CD8-positive, alpha-beta T cell (primary cell): ENCODE measurements at regions of chr1 and their contacts with region 1.

Region 1: DNA sequence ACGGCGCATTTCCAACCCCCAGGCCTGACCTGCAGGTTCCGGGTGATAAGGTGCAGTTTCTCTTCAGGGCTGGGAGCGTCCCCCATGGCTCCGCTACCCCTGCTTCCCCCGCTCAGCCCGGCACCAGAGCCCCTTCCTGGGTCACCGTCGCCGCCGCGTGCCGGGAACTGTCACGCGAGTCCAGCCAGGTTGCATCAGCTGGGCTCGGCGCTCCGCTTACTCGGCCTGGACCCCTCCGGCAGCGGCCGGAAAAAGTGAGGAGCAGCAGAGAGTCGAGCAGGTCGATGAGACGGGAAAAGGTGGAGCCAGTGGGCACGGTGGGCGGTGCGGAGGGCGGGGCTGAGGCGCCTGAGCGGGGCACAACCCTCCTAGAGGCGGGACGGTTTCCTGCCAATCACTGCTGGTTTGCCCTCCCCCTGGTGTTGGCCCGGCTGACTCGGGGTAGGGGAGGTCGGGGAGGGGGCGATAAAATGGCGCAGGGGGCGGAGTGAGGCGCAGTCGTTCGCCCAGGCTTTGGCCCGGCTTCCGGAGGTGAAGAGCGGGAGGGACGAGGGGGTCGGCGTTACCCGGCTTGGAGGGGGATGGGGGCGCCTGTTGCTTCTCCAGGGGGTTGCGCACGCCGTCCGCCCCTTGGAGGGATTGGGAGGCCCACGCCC is at the starts of genes S100PBP and YARS1:
- DNase-seq: peak; percentile 98 to 100 (median 100)
- ATAC-seq: peak; percentile 95
- H3K4me3 ChIP-seq: peak within 1 kb of the TSS; percentile 86 to 98
- H3K4me3 Mint-ChIP-seq: peak within 1 kb of the TSS; percentile 96
- H3K27ac ChIP-seq: peak within 1 kb of the TSS; percentile 76 to 84
- H3K27ac Mint-ChIP-seq: peak within 1 kb of the TSS; percentile 90
- H3K4me1 ChIP-seq: peaks cover 34% of the 10 kb centered on the region
- H3K4me1 Mint-ChIP-seq: peaks cover 63% of the 10 kb centered on the region
- H3K27me3 ChIP-seq: no peaks in the 10 kb centered on the region
- H3K27me3 Mint-ChIP-seq: no peaks in the 10 kb centered on the region
- CTCF ChIP-seq: no peak
- total RNA-seq, gene S100PBP: 21.2 to 26.6 TPM
- total RNA-seq, gene YARS1: 105 to 114 TPM

Region 2: DNA sequence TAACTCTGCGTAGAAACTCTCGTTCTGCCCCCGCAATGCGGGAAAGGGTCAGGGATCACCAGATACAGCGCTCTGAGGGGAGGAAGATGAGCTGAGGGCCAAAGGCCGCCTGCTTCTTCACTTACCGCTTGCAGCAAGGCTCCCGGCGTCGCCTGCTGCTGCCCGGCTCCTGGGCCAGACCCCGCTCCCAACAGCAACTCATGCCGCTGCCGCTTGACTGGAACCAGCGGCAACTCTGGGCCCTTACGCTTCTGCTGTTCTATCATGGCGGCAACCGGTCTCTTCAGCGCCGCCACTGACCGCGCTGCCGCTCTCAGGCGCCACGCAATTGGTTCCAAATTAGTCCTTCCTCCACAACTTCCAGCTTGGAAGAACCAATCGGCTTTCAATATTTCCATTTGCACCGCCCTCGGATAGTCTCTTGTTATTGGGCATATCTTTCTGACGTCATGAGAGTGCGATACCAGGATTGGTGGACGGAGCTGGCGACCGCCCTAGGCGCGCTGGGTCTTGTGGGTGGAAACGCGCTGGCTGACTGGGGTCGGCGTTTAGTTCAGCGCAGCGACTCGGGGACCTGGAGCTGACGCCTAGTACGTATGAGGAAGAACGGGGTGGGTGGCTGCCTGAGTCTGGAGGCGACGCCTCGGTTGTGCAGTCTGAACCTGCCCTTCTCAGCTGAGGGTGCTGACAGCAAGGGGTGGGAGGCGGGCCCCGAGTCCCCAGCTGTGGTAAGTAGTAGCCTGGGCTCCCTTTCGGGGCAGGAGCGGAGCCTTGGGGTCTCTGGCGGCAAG is 1520.6 kb before region 1 on chr1 and contains the starts of genes SNRNP40 and ZCCHC17:
- CTCF ChIA-PET with region 1: no interaction called
- POLR2A ChIA-PET with region 1: no interaction called
- intact Hi-C with region 1: loop called in 1 of 2 experiments (anchors 5 kb)
- DNase-seq: peak; percentile 85 to 99 (median 91)
- ATAC-seq: peak; percentile 90
- H3K4me3 ChIP-seq: peak within 1 kb of the TSS; percentile 67 to 83
- H3K4me3 Mint-ChIP-seq: no peak within 1 kb of the TSS
- H3K27ac ChIP-seq: peak within 1 kb of the TSS; percentile 90 to 92
- H3K27ac Mint-ChIP-seq: no peak within 1 kb of the TSS
- H3K4me1 ChIP-seq: peaks cover 31% of the 10 kb centered on the region
- H3K4me1 Mint-ChIP-seq: peaks cover 35% of the 10 kb centered on the region
- H3K27me3 ChIP-seq: no peaks in the 10 kb centered on the region
- H3K27me3 Mint-ChIP-seq: no peaks in the 10 kb centered on the region
- CTCF ChIP-seq: no peak
- total RNA-seq, gene SNRNP40: 78.3 to 81.9 TPM
- total RNA-seq, gene ZCCHC17: 7.2 to 8.0 TPM

Region 3: GRCh38 chr1:32200226-32201010 is 616.9 kb before region 1 on chr1 and contains the start of gene CCDC28B:
- CTCF ChIA-PET with region 1: no interaction called
- POLR2A ChIA-PET with region 1: no interaction called
- intact Hi-C with region 1: loop called in 1 of 2 experiments (anchors 5 kb)
- DNase-seq: peak in 8 of 9 experiments; percentile 32 to 81 (median 64)
- ATAC-seq: peak; percentile 49
- H3K4me3 ChIP-seq: peak within 1 kb of the TSS; percentile 69 to 70
- H3K4me3 Mint-ChIP-seq: peak within 1 kb of the TSS; percentile 85
- H3K27ac ChIP-seq: peak within 1 kb of the TSS; percentile 75 to 78
- H3K27ac Mint-ChIP-seq: peak within 1 kb of the TSS; percentile 97
- H3K4me1 ChIP-seq: peaks cover 46% of the 10 kb centered on the region
- H3K4me1 Mint-ChIP-seq: peaks cover 59% of the 10 kb centered on the region
- H3K27me3 ChIP-seq: no peaks in the 10 kb centered on the region
- H3K27me3 Mint-ChIP-seq: no peaks in the 10 kb centered on the region
- CTCF ChIP-seq: no peak
- total RNA-seq, gene CCDC28B: 3.8 to 5.2 TPM

Region 4: GRCh38 chr1:32716312-32717148 is 100.8 kb before region 1 on chr1:
- CTCF ChIA-PET with region 1: no interaction called
- POLR2A ChIA-PET with region 1: no interaction called
- intact Hi-C with region 1: loop called in 1 of 2 experiments (anchors 1 kb)
- DNase-seq: peak in 5 of 9 experiments; percentile 3 to 58 (median 43)
- ATAC-seq: no peak
- H3K4me3 ChIP-seq: no peak overlapping the region
- H3K4me3 Mint-ChIP-seq: no peak overlapping the region
- H3K27ac ChIP-seq: no peak overlapping the region
- H3K27ac Mint-ChIP-seq: no peak overlapping the region
- H3K4me1 ChIP-seq: no peaks in the 10 kb centered on the region
- H3K4me1 Mint-ChIP-seq: peaks cover 11% of the 10 kb centered on the region
- H3K27me3 ChIP-seq: no peaks in the 10 kb centered on the region
- H3K27me3 Mint-ChIP-seq: peaks cover 7% of the 10 kb centered on the region
- CTCF ChIP-seq: no peak

Region 5: DNA sequence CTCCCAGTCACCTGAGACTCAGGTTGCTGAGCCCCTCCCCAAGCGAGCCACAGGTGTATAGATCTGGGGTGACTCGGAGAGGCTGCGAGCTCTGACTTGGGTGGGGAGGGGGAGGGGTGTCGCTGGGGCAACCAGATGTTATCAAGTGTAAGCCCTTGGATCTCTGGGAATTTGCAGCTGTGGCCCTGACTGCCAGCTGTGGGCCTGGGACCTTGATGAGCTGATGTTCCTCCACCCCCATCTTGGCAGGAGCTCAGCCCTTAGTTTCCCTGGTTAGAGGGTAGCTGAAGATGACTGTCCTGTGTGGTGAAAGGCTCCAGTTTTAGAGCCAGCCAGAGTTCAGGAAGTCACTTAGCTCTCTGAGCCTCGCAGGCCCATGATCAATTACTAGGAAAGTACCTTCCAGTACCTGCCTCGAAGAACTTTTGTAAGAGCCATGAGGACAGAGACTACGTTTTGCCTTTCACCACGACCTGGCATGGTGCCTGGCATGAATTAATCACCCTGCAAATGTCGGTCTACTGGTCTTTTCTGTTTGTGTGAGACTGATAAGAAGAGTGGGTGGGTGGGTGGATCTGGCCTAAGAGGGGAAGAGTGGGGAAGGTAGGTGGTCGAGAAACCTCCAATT is 55.9 kb before region 1 on chr1:
- CTCF ChIA-PET with region 1: no interaction called
- POLR2A ChIA-PET with region 1: no interaction called
- intact Hi-C with region 1: no loop called
- DNase-seq: no peak
- ATAC-seq: no peak
- H3K4me3 ChIP-seq: no peak overlapping the region
- H3K4me3 Mint-ChIP-seq: no peak overlapping the region
- H3K27ac ChIP-seq: no peak overlapping the region
- H3K27ac Mint-ChIP-seq: no peak overlapping the region
- H3K4me1 ChIP-seq: peaks cover 11% of the 10 kb centered on the region
- H3K4me1 Mint-ChIP-seq: peaks cover 10% of the 10 kb centered on the region
- H3K27me3 ChIP-seq: no peaks in the 10 kb centered on the region
- H3K27me3 Mint-ChIP-seq: no peaks in the 10 kb centered on the region
- CTCF ChIP-seq: no peak

Region 6: DNA sequence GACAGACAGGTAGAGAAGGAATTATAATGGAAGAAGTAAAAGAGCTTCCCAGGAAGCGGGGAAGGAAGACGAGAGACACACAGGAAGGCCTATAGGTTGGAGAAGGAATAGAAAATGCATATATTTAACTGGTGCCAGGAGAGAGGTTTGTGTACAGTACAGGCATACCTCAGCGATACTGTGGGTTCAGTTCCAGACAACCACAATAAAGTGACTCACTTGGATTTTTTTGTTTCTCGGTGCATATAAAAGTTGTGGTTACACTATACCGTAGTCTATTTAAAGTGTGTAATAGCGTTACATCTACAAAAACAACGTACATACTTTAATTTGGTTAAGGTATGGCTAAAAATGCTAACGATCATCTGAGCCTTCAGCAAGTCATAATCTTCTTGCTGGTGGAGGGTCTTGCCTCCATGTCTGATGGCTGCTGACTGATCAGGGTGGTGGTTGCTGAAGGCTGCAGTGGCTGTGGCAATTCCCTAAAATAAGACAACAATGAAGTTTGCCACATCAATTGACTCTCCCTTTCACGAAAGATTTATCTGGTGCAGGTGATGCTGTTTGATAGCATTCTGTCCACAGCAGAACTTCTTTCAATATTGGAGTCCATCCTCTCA is 16.1 kb before region 1 on chr1:
- CTCF ChIA-PET with region 1: interaction called, 3 read pairs
- POLR2A ChIA-PET with region 1: interaction called, 3 read pairs
- intact Hi-C with region 1: loop called (anchors 1 kb)
- DNase-seq: peak in 5 of 9 experiments; percentile 29 to 86 (median 62)
- ATAC-seq: peak; percentile 55
- H3K4me3 ChIP-seq: no peak overlapping the region
- H3K4me3 Mint-ChIP-seq: peak overlapping the region; percentile 27
- H3K27ac ChIP-seq: peak overlapping the region; percentile 4 to 46
- H3K27ac Mint-ChIP-seq: peak overlapping the region; percentile 95
- H3K4me1 ChIP-seq: peaks cover 47% of the 10 kb centered on the region
- H3K4me1 Mint-ChIP-seq: peaks cover 52% of the 10 kb centered on the region
- H3K27me3 ChIP-seq: no peaks in the 10 kb centered on the region
- H3K27me3 Mint-ChIP-seq: no peaks in the 10 kb centered on the region
- CTCF ChIP-seq: no peak

Region 7: DNA sequence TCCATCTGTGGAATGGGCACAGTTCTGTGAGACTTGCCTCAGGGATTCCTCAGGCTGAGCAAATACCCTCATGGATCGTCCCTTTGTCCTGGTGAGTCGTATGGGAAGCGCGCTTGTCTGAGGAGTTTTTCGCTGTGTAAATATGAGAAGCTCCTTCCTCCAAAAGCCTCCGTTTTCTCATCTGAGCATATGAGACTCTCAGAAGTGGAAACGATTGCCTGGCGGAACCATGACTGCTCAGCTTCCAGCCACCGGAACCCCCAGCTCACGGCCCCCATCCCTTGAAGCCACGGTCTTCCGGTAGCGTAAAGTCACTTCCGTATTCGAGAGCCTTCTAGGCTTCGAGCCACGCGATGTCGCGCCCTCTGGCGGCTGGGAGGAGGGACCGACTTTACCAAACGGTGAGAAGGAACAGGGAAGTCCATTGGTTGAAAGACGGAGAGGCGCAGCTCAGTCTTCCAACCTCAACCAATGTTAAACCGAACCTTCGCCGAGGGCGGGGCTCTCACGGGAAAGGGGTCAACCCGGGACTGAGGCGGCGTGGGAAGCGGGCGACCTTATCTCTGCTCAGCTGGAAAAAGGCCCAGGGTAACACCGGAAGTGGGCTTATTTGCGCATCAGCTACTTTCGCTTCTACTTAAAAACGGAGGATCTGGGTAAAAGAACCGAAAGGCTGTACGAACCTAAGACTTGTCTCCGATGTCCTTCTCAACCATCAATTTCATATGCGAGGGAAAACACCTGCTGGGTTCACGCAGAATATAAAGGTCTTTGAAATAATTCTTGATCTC is 309.9 kb after region 1 on chr1:
- CTCF ChIA-PET with region 1: no interaction called
- POLR2A ChIA-PET with region 1: no interaction called
- intact Hi-C with region 1: loop called (anchors 1 to 5 kb)
- DNase-seq: peak; percentile 95 to 100 (median 99)
- ATAC-seq: peak; percentile 92
- H3K4me3 ChIP-seq: peak overlapping the region; percentile 61 to 74
- H3K4me3 Mint-ChIP-seq: peak overlapping the region; percentile 93
- H3K27ac ChIP-seq: peak overlapping the region; percentile 68 to 96
- H3K27ac Mint-ChIP-seq: peak overlapping the region; percentile 92
- H3K4me1 ChIP-seq: peaks cover 26% of the 10 kb centered on the region
- H3K4me1 Mint-ChIP-seq: peaks cover 52% of the 10 kb centered on the region
- H3K27me3 ChIP-seq: no peaks in the 10 kb centered on the region
- H3K27me3 Mint-ChIP-seq: no peaks in the 10 kb centered on the region
- CTCF ChIP-seq: peak; percentile 90